CD8-positive, alpha-beta T cell (primary cell): ENCODE measurements at regions of chr3 and their contacts with region 1.

Region 1: DNA sequence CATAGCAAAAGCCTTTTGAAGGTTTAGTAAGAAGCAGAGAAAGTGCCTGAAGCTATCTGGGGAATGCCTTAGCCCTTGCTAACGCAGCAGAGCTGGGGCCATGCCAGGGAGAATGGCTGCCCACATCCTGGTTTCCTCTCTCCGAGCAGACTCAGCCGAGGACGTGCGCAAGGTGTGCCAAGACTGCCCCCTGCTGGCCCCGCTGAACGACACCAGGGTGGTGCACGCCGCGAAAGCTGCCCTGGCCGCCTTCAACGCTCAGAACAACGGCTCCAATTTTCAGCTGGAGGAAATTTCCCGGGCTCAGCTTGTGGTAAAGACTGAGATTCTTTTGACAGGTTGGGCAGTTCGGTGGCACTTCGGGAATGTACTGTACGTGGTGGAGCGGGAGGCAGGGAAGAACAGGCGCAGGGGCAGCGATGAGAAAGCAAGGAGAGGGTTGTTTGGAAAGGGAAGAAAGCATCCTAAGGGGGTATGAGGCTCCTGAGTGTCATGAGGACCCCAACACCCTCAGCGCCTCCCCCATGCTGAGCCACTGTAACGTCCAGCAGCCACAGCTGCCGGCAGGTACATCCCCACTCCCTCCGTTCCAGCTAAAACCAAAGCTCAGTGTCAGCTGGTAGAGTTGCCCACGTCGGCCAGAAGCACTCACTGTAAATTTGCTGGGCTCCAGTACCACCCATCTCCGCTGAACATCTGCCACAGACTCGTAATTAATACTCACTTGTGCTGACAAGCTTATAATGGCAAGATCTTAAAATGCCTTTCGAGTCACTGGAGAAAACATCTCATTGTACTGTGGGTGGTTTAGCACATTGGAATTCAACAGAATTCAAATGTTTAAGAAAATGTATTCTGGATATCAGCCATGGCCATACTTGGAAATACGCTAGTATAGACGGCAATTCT is 4.4 kb downstream of the AHSG start:
- DNase-seq: peak; percentile 59 to 95 (median 87)
- ATAC-seq: peak; percentile 99
- H3K4me3 ChIP-seq: peak overlapping the region in 1 of 2 experiments; percentile 15
- H3K4me3 Mint-ChIP-seq: peak overlapping the region; percentile 67
- H3K27ac ChIP-seq: no peak overlapping the region
- H3K27ac Mint-ChIP-seq: no peak overlapping the region
- H3K4me1 ChIP-seq: peaks cover 17% of the 10 kb centered on the region
- H3K4me1 Mint-ChIP-seq: peaks cover 22% of the 10 kb centered on the region
- H3K27me3 ChIP-seq: peaks cover 0 to 10% of the 10 kb centered on the region in 2 experiments
- H3K27me3 Mint-ChIP-seq: peaks cover 34% of the 10 kb centered on the region
- CTCF ChIP-seq: peak; percentile 79

Region 2: GRCh38 chr3:185983495-185984141 is 633.7 kb before region 1 on chr3:
- CTCF ChIA-PET with region 1: interaction called, 81 read pairs
- POLR2A ChIA-PET with region 1: no interaction called
- intact Hi-C with region 1: loop called (anchors 1 kb)
- DNase-seq: peak; percentile 14 to 76 (median 56)
- ATAC-seq: peak; percentile 61
- H3K4me3 ChIP-seq: no peak overlapping the region
- H3K4me3 Mint-ChIP-seq: no peak overlapping the region
- H3K27ac ChIP-seq: no peak overlapping the region
- H3K27ac Mint-ChIP-seq: no peak overlapping the region
- H3K4me1 ChIP-seq: peaks cover 4% of the 10 kb centered on the region
- H3K4me1 Mint-ChIP-seq: peaks cover 3% of the 10 kb centered on the region
- H3K27me3 ChIP-seq: peaks cover 0 to 9% of the 10 kb centered on the region in 2 experiments
- H3K27me3 Mint-ChIP-seq: peaks cover 8% of the 10 kb centered on the region
- CTCF ChIP-seq: peak; percentile 84

Region 3: DNA sequence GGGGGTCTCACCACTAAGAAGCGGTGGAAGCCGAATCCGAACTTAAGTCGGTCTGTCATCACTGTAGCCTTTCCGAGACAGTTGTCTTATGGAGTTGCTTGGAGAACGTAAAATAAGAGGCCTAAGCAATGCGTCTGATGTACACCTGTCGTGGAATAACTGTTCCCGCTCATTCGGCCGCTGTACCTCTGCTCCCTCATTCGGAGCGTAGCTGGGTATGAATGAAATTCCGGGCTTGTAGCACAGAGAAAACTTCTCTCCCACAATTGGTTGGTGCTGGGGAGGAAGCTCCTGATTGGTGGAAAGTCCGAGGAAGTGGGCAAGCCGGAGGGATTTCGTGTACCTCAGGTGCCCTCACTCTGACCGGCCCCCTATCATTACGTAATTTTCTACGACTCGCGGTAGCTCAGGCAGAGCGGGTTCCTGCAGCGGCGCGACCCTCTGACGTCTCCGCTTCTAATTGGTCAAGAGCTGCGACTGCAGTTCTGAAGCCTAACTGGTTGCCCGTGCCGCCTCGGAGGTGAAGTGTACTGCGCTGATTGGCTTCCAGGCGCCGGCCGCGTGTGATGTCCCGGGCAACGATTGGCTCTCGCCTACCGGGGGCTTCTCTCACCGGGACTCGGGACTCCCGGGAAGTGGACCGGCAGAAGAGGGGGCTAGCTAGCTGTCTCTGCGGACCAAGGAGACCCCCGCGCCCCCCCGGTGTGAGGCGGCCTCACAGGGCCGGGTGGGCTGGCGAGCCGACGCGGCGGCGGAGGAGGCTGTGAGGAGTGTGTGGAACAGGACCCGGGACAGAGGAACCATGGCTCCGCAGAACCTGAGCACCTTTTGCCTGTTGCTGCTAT is 47.0 kb before region 1 on chr3 and contains the start of gene DNAJB11:
- CTCF ChIA-PET with region 1: interaction called, 8 read pairs
- POLR2A ChIA-PET with region 1: no interaction called
- intact Hi-C with region 1: loop called (anchors 1 to 2 kb)
- DNase-seq: peak; percentile 94 to 100 (median 97)
- ATAC-seq: peak; percentile 82
- H3K4me3 ChIP-seq: peak within 1 kb of the TSS; percentile 73 to 96
- H3K4me3 Mint-ChIP-seq: peak within 1 kb of the TSS; percentile 94
- H3K27ac ChIP-seq: peak within 1 kb of the TSS; percentile 94 to 97
- H3K27ac Mint-ChIP-seq: peak within 1 kb of the TSS; percentile 98
- H3K4me1 ChIP-seq: peaks cover 30% of the 10 kb centered on the region
- H3K4me1 Mint-ChIP-seq: peaks cover 59% of the 10 kb centered on the region
- H3K27me3 ChIP-seq: no peaks in the 10 kb centered on the region
- H3K27me3 Mint-ChIP-seq: no peaks in the 10 kb centered on the region
- CTCF ChIP-seq: no peak
- total RNA-seq, gene DNAJB11: 70.2 to 73.4 TPM

Region 4: DNA sequence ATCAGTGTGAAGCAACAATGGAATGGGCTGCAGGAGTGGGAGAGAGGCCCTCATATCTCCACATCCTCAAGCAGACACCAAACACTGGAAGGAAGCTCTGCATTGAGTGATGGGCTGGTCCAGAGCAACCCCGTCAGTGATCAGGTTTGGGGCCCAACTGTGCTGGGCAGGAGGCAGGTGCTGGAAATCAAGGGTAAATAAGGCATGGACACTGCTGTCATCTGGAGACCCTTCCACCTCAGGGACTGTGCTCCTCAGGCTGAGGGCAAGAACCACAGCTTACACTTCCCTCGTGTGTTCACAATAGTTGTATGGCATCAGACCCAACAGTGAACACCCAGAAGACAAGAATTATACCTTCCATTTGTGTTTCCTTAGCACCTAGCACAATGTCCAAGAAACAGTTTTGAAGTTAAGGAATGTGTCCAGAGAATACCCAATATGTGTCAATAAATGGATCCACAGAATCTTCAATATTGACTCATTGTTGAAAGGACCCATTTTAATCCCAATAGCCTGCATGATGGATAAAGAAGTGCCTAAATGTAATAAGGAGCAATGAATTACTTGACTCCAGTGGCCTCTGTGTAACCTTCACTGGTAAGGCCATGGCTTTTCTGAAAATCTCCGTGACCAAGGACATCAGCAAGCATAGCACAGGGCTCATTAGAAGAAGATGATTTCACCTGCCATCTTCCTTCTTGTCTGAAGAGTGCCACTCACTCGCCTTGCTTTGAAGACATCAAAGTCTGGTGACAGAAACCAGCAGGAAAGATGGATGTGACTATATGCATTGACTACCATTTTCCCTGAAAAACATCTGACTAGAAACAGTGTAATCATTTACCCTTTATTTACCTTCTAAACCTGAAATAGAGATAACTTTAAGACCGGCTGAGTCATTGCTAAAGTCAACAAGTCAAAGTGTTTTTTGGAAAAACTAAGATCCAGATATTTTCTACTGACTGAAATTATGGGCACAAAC is 11.4 kb before region 1 on chr3:
- CTCF ChIA-PET with region 1: interaction called, 48 read pairs
- POLR2A ChIA-PET with region 1: no interaction called
- intact Hi-C with region 1: no loop called
- DNase-seq: no peak
- ATAC-seq: no peak
- H3K4me3 ChIP-seq: no peak overlapping the region
- H3K4me3 Mint-ChIP-seq: no peak overlapping the region
- H3K27ac ChIP-seq: no peak overlapping the region
- H3K27ac Mint-ChIP-seq: no peak overlapping the region
- H3K4me1 ChIP-seq: no peaks in the 10 kb centered on the region
- H3K4me1 Mint-ChIP-seq: no peaks in the 10 kb centered on the region
- H3K27me3 ChIP-seq: no peaks in the 10 kb centered on the region
- H3K27me3 Mint-ChIP-seq: no peaks in the 10 kb centered on the region
- CTCF ChIP-seq: no peak

Region 5: GRCh38 chr3:186783073-186783730 is 165.9 kb after region 1 on chr3 and contains the start of gene EIF4A2:
- CTCF ChIA-PET with region 1: interaction called, 3 read pairs
- POLR2A ChIA-PET with region 1: interaction called, 15 read pairs
- intact Hi-C with region 1: no loop called
- DNase-seq: peak; percentile 79 to 96 (median 88)
- ATAC-seq: peak; percentile 67
- H3K4me3 ChIP-seq: peak within 1 kb of the TSS; percentile 90 to 95
- H3K4me3 Mint-ChIP-seq: peak within 1 kb of the TSS; percentile 99
- H3K27ac ChIP-seq: peak within 1 kb of the TSS; percentile 93 to 97
- H3K27ac Mint-ChIP-seq: peak within 1 kb of the TSS; percentile 99
- H3K4me1 ChIP-seq: peaks cover 38% of the 10 kb centered on the region
- H3K4me1 Mint-ChIP-seq: peaks cover 52% of the 10 kb centered on the region
- H3K27me3 ChIP-seq: no peaks in the 10 kb centered on the region
- H3K27me3 Mint-ChIP-seq: no peaks in the 10 kb centered on the region
- CTCF ChIP-seq: no peak
- total RNA-seq, gene EIF4A2: 934 to 978 TPM

Region 6: GRCh38 chr3:186821429-186822367 is 204.4 kb after region 1 on chr3:
- CTCF ChIA-PET with region 1: interaction called, 274 read pairs
- POLR2A ChIA-PET with region 1: interaction called, 5 read pairs
- intact Hi-C with region 1: loop called (anchors 1 kb)
- DNase-seq: peak in 3 of 9 experiments; percentile 31 to 75 (median 68)
- ATAC-seq: peak; percentile 30
- H3K4me3 ChIP-seq: no peak overlapping the region
- H3K4me3 Mint-ChIP-seq: no peak overlapping the region
- H3K27ac ChIP-seq: no peak overlapping the region
- H3K27ac Mint-ChIP-seq: no peak overlapping the region
- H3K4me1 ChIP-seq: peaks cover 12% of the 10 kb centered on the region
- H3K4me1 Mint-ChIP-seq: peaks cover 14% of the 10 kb centered on the region
- H3K27me3 ChIP-seq: peaks cover 4 to 7% of the 10 kb centered on the region in 2 experiments
- H3K27me3 Mint-ChIP-seq: peaks cover 18% of the 10 kb centered on the region
- CTCF ChIP-seq: peak; percentile 76